Activated CD4-positive, alpha-beta T cell treated with anti-CD3 and anti-CD28 coated beads, Interleukin-2, amount 10 ng/mL, durations not matched to agents 24 days and 14 days (primary cell): ENCODE measurements at regions of chr19 and their contacts with region 1.

Region 1: DNA sequence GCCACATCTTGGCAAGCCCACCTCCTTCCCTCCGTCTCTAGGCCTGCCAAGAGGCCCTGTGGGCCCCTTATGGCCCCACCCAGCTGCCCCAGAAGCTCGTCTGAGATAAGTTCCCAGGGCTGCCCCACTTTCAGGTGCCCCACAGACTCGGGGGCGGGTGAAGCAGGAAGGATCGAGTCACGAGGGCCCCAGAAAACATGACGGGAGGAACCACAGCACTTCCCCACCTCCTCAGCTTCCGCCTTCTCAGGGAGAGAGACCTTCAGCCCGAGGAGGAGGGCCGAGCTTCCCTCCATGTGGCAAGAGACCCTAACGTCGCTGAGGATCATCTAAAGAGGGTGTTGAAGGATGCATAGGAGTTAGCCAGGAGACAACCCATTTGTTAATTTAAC is 4.5 kb upstream of the IL12RB1 start:
- DNase-seq: peak; percentile 93
- H3K4me3 Mint-ChIP-seq: peak overlapping the region; percentile 61
- H3K27ac Mint-ChIP-seq: peak overlapping the region; percentile 91
- H3K4me1 Mint-ChIP-seq: peaks cover 49% of the 10 kb centered on the region
- H3K27me3 Mint-ChIP-seq: no peaks in the 10 kb centered on the region

Region 2: GRCh38 chr19:17847538-17848366 is 243.5 kb before region 1 on chr19 and contains the start of gene JAK3:
- intact Hi-C with region 1: loop called (anchors 5 kb)
- DNase-seq: peak; percentile 97
- H3K4me3 Mint-ChIP-seq: peak within 1 kb of the TSS; percentile 94
- H3K27ac Mint-ChIP-seq: peak within 1 kb of the TSS; percentile 94
- H3K4me1 Mint-ChIP-seq: peaks cover 59% of the 10 kb centered on the region
- H3K27me3 Mint-ChIP-seq: peaks cover 1% of the 10 kb centered on the region
- total RNA-seq, gene JAK3: 226 and 239 TPM in 2 replicates

Region 3: DNA sequence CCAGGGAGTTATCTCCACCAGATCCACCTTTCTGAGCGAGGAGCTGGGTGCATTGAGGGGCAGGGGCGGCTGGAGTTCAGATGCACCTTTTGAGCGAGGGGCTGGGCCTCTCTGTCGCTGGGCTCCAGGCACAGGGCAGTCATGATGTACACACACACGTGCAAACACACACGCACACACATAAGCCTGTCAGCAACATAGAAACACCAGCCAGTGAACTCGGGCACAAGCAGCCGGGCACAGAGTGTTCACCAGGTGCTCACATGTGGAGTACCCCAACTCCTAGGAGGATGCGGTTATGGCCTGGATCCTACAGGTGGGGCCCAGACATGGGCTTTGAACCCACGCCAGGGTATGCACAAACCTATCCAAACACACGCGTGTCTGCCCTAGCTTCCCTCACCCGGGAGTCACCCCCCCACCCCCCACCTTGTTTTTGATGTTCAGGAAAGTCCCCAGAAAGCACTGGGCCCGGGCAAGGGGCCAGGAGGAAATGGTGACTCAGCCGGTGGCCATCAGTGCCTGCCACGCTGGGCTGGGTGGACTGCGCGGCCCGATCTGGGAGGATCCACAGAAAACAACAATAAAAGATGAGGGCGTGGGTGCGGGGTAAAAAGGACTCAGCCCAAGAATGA is 70.0 kb before region 1 on chr19:
- intact Hi-C with region 1: loop called (anchors 5 kb)
- DNase-seq: peak; percentile 88
- H3K4me3 Mint-ChIP-seq: peak overlapping the region; percentile 94
- H3K27ac Mint-ChIP-seq: peak overlapping the region; percentile 98
- H3K4me1 Mint-ChIP-seq: peaks cover 60% of the 10 kb centered on the region
- H3K27me3 Mint-ChIP-seq: no peaks in the 10 kb centered on the region

Region 4: DNA sequence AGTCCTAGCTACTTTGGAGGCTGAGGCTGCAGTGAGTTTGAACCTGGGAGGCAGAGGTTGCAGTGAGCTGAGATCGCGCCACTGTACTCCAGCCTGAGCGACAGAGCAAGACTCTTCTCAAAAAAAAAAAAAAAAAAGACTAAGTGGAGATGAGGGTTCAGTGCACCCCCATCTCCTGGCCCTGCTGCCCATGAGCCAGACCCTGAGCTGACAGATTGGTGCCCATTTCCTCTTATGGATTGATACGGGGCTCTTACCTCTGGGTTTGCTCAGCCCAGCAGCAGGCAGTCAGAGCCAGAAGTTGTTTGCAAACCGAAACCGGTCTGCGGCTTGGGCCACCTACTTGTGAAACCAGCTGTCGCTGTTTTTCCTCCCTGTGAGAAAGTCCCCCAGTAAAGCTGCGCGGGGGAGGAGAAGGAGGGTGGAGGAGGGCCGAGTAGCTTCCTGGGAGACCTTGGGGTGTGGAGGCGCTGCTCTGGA is 46.3 kb before region 1 on chr19:
- intact Hi-C with region 1: loop called (anchors 5 kb)
- DNase-seq: peak; percentile 96
- H3K4me3 Mint-ChIP-seq: peak overlapping the region; percentile 79
- H3K27ac Mint-ChIP-seq: peak overlapping the region; percentile 93
- H3K4me1 Mint-ChIP-seq: peaks cover 38% of the 10 kb centered on the region
- H3K27me3 Mint-ChIP-seq: peaks cover 3% of the 10 kb centered on the region

Region 5: DNA sequence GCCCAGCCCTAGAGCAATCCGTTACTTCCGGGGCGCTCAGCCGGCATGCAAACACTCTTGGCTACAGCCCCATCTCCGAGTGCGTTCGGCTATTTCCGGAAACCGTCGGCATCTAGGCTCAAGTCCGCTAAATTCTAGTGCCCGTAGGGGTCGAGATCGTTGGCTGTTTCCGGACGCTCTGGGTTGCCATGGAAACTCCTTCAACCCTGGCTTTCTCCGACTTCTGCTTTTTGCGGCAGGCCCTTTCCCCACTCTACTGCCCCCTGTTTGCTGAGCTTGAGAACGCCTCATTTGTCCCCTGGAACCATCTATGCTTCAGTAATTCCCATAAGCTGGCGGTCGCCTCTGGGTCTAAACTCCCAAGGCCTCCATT is 61.2 kb after region 1 on chr19:
- intact Hi-C with region 1: loop called (anchors 2 kb)
- DNase-seq: peak; percentile 99
- H3K4me3 Mint-ChIP-seq: peak overlapping the region; percentile 86
- H3K27ac Mint-ChIP-seq: peak overlapping the region; percentile 96
- H3K4me1 Mint-ChIP-seq: peaks cover 24% of the 10 kb centered on the region
- H3K27me3 Mint-ChIP-seq: no peaks in the 10 kb centered on the region